Ascending aorta (tissue), 2 donors: ENCODE measurements at regions of chr5 and their contacts with region 1.

Region 1: GRCh38 chr5:69007726-69008368 is 86.0 kb upstream of the SLC30A5 start:
- DNase-seq: peak in 1 of 2 donors; percentile 64
- H3K4me3 ChIP-seq: no peak overlapping the region
- H3K27ac ChIP-seq: no peak overlapping the region
- H3K4me1 ChIP-seq: no peaks in the 10 kb centered on the region
- H3K27me3 ChIP-seq: no peaks in the 10 kb centered on the region
- CTCF ChIP-seq: peak; percentile 16 to 54 (median 41)

Region 2: DNA sequence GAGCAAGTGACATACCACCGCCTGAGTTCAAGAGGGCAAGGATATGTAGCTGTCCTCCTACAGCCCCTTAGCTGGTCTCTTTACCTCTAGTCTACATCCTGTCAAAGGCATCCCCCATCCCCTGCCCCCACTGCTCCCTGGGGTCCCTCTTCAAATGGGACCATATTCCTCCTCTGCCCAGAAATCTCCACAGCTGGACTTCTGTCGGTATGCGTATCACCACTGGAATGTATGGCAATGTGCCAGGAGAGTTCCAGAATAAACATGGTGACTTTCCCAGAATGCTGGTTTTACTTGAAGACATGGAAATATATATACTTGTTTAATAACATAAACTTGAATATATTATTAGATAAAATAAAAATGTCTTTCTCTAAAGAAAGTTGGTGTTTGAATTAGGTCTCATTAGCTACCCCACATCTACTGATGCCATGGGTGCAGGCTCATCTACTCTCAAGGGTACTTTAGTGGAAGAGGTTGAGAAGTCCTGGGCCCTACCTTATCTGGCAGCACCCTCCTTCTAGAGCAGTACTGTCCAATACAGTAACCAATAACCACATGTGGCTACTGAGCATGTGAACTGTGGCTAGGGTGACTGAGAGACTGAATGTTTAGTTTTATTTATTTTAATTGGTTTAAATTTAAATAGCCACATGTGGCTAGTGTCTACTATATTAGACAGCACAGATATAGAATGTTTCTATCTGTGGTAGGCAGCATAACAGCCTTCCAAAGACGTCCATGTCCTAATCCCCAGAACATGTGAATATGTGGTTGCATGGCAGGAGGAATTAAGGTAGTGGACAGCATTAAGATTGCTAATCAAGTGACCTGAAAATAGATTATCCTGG is 95.8 kb before region 1 on chr5:
- intact Hi-C with region 1: loop called (anchors 10 kb)
- DNase-seq: no peak
- H3K4me3 ChIP-seq: no peak overlapping the region
- H3K27ac ChIP-seq: no peak overlapping the region
- H3K4me1 ChIP-seq: no peaks in the 10 kb centered on the region
- H3K27me3 ChIP-seq: no peaks in the 10 kb centered on the region
- CTCF ChIP-seq: no peak